Activated CD8-positive, alpha-beta memory T cell treated with anti-CD3 and anti-CD28 coated beads, Interleukin-2, amount 10 ng/mL, durations not matched to agents 7 days and 5 days (primary cell): ENCODE measurements at regions of chr1 and their contacts with region 1.

Region 1: GRCh38 chr1:173429471-173430402 is 47.4 kb upstream of the PRDX6 start:
- DNase-seq: peak; percentile 79
- ATAC-seq: peak; percentile 88
- H3K4me3 Mint-ChIP-seq: peak overlapping the region; percentile 18
- H3K27ac Mint-ChIP-seq: peak overlapping the region; percentile 77
- H3K4me1 Mint-ChIP-seq: peaks cover 33% of the 10 kb centered on the region
- H3K27me3 Mint-ChIP-seq: no peaks in the 10 kb centered on the region

Region 2: DNA sequence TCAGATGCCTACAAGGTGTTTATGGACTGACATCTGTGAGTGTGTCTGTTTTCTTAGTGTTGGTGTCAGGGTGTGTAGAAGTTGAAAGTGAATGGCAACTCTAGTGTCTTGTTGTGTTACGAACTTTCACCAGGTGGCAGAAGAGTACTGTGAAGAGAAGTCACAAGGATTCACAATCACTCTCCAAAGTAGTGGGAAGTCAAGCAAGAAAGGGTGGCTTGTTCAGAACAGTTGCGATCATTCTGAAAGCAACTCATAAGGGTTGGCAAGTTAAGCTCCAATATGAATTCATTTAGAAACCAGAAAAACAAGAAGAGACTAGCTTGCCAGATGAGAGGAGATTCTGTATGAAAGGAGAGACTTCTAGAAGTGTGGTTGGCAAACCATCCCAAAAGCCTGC is 684.7 kb before region 1 on chr1:
- CTCF ChIA-PET with region 1: interaction called, 15 read pairs
- DNase-seq: peak; percentile 56
- ATAC-seq: peak; percentile 69
- H3K4me3 Mint-ChIP-seq: no peak overlapping the region
- H3K27ac Mint-ChIP-seq: no peak overlapping the region
- H3K4me1 Mint-ChIP-seq: peaks cover 28% of the 10 kb centered on the region
- H3K27me3 Mint-ChIP-seq: peaks cover 53% of the 10 kb centered on the region

Region 3: DNA sequence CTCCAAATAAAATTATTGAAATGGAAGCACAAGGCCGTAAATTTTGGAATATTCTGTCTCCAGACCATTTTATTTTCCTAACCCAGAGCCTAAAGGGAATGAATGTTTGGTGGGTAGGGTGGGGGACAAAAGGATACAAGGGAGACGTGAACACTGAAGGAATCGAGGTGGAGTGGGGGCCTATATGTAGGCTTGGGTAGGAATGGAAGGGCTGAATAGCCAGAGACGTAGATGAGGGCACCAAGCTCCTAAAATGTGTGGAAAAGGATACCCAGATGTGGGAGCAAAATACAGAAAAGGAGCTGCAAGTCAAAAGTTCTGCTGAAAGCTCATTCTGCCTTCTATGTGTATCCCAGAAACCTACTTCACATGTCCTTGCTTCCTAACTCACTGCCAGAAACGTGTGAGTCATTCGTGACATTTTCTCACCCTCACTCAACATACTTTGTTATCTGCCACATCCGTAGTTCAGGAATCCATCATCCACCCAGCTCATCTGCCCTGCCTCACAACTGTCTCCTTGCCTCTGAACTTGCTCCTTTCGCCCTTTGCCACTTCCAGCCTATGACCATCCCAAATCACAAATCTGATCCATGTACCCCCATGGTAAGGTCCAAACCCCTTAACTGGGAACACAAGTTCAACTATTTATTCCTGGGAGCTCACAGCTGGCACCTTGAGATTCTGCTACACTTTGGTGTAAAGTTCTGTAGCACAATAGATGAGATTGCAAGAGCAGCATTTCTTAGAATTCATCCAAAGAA is 36.7 kb before region 1 on chr1:
- CTCF ChIA-PET with region 1: no interaction called
- DNase-seq: no peak
- ATAC-seq: no peak
- H3K4me3 Mint-ChIP-seq: no peak overlapping the region
- H3K27ac Mint-ChIP-seq: no peak overlapping the region
- H3K4me1 Mint-ChIP-seq: no peaks in the 10 kb centered on the region
- H3K27me3 Mint-ChIP-seq: no peaks in the 10 kb centered on the region

Region 4: DNA sequence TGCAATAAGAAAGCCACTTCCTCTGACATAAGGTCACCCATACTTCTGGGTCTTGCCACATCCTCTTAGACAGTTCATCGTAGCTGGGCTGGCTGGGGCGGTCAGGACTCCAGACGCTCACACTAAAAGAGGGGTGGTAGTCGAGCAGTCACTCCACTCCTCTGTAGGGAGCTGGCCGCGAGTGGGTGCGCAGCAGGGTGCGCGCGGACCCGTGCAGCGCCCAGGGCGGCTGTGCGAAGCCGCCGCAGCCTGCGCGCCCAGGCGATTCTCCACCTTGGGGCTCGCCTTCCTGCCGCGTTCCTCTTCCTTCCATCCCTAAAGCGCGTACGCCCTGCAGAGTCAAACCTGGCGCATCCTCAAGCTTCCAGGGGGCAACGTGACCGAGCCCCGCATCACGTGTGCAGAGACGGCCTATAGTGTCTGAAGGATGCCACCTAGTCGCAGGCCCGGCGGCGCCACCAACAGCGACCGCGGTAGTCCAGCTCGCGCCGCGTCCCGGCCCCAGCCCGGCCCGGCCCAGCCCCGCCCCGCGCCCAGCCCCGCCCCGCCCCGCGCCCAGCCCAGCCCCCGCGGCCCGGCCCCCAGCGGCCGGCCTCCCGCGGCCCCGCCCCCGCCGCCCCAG is 47.0 kb after region 1 on chr1:
- CTCF ChIA-PET with region 1: interaction called, 16 read pairs
- DNase-seq: peak; percentile 88
- ATAC-seq: peak; percentile 85
- H3K4me3 Mint-ChIP-seq: peak overlapping the region; percentile 87
- H3K27ac Mint-ChIP-seq: peak overlapping the region; percentile 94
- H3K4me1 Mint-ChIP-seq: peaks cover 51% of the 10 kb centered on the region
- H3K27me3 Mint-ChIP-seq: no peaks in the 10 kb centered on the region

Region 5: DNA sequence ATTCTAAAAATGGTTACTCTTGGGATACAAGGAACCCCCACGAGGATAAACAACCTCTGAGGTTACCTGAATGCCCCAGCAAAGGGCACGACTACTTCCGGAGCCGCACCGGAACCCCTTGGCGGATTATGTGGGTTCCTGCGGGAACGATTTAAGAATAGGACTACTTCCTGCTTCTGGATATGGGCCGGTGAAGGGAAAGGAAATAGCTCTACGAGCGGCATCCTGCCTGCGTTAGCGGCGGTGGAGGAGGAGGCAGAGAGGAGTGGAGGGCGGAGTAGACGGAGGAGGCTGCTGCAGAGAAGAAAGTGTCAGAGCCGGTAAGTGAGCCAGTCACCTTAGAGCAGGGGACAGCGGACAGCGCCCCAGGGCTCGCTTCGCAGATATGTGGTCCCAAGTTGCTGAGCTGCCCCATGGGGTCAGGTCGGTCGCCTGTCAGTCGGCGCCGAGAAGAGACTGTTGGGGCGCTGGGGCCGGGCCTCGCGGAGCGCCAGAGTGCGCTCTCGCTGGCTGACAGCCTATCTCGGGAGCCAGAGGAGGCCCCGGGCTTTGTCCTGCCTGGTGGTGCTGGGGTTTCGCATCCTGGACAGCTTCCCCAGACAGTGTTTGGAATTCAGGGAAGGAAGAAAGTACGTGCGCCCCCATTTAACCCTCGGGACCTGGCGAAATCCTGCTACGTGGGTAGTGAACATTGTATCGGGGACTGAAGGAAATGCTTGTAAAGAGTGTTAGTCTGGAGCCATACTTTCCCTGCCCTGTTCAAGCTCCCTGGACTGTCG is 285.2 kb after region 1 on chr1 and contains the start of gene KLHL20:
- CTCF ChIA-PET with region 1: interaction called, 30 read pairs
- DNase-seq: peak; percentile 93
- ATAC-seq: peak; percentile 99
- H3K4me3 Mint-ChIP-seq: peak within 1 kb of the TSS; percentile 88
- H3K27ac Mint-ChIP-seq: peak within 1 kb of the TSS; percentile 90
- H3K4me1 Mint-ChIP-seq: peaks cover 25% of the 10 kb centered on the region
- H3K27me3 Mint-ChIP-seq: peaks cover 19% of the 10 kb centered on the region
- total RNA-seq, gene KLHL20: 18.8 to 25.0 TPM

Region 6: DNA sequence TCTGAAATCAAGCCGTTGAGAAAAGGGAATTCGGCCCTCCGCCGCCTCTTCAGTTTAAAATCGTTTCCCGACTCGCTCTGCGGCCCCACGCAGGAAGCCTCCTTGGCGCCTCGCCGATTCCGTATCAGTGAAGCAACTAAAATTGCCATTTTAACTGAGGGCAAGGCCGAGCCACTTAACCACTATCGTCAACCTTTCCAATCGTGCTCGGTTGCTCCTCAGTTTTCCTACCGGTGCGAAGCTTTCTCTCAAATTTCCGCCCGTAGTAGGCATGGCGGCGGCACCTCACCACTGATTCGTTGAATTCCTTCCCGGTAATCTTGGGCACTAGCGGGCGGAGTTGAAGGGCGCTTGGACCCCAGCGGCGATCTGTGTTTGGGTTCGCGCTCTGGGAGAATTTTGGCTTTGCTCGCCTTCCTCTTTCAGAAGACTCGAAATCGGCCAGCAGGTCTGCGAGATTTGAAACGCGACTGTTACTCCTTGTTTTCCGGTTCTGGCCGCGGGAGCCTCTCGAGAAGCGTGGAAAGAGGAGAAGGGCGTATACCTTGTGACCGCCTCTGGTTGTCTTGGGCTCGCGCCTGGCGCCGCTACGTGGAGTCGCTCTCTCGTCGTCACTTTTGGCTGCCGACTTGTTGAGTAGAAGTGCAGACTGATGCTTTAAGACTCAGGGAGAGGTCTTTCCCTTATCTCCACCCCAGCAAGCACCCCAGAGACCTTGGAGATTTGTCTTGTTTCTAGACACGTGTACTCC is 394.8 kb after region 1 on chr1 and contains the starts of genes CENPL and DARS2:
- CTCF ChIA-PET with region 1: interaction called, 35 read pairs
- DNase-seq: peak; percentile 96
- ATAC-seq: peak; percentile 85
- H3K4me3 Mint-ChIP-seq: peak within 1 kb of the TSS; percentile 98
- H3K27ac Mint-ChIP-seq: peak within 1 kb of the TSS; percentile 98
- H3K4me1 Mint-ChIP-seq: peaks cover 63% of the 10 kb centered on the region
- H3K27me3 Mint-ChIP-seq: no peaks in the 10 kb centered on the region
- total RNA-seq, gene CENPL: 35.4 to 42.0 TPM
- total RNA-seq, gene DARS2: 28.7 to 32.3 TPM